ENCODE measurements at regions of chr7 and their contacts with region 1.

Region 1: GRCh38 chr7:97859606-97860204 is 12.5 kb downstream of the ASNS start:
- DNase-seq: no peak
- H3K4me3 ChIP-seq: no peak overlapping the region
- H3K4me3 Mint-ChIP-seq: no peak overlapping the region
- H3K27ac ChIP-seq: no peak overlapping the region
- H3K27ac Mint-ChIP-seq: no peak overlapping the region
- H3K4me1 ChIP-seq: no peaks in the 10 kb centered on the region
- H3K4me1 Mint-ChIP-seq: no peaks in the 10 kb centered on the region
- H3K27me3 ChIP-seq: no peaks in the 10 kb centered on the region
- H3K27me3 Mint-ChIP-seq: peaks cover 0 to 2% (median 0%) of the 10 kb centered on the region in 3 donors
- CTCF ChIP-seq: no peak

Region 2: GRCh38 chr7:95865716-95866371 is 1993.9 kb before region 1 on chr7:
- intact Hi-C with region 1: loop called in 1 of 2 experiments (anchors 5 kb)
- DNase-seq: no peak
- H3K4me3 ChIP-seq: no peak overlapping the region
- H3K4me3 Mint-ChIP-seq: no peak overlapping the region
- H3K27ac ChIP-seq: no peak overlapping the region
- H3K27ac Mint-ChIP-seq: no peak overlapping the region
- H3K4me1 ChIP-seq: no peaks in the 10 kb centered on the region
- H3K4me1 Mint-ChIP-seq: no peaks in the 10 kb centered on the region
- H3K27me3 ChIP-seq: no peaks in the 10 kb centered on the region
- H3K27me3 Mint-ChIP-seq: peaks cover 0 to 3% (median 0%) of the 10 kb centered on the region in 3 donors
- CTCF ChIP-seq: no peak

Region 3: DNA sequence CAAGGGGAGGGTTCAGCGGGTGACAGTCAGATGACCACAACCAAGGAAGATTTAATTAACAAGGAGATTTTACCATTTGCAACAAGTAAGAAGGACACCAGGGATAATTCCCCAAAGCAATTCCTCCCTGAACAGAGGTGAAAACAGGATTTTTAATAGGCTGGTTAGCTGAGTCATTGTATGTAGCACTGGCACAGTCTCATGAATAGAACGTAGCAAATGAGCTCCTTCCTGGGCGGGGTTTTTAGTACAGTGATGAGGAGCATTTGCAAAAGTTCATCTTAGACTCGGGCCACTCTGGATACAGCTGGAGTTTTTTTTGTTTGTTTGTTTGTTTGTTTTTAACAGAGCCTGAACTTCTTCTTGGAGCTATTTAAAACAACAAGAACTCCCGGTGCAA is 88.9 kb before region 1 on chr7:
- intact Hi-C with region 1: no loop called
- DNase-seq: no peak
- H3K4me3 ChIP-seq: no peak overlapping the region
- H3K4me3 Mint-ChIP-seq: no peak overlapping the region
- H3K27ac ChIP-seq: no peak overlapping the region
- H3K27ac Mint-ChIP-seq: no peak overlapping the region
- H3K4me1 ChIP-seq: no peaks in the 10 kb centered on the region
- H3K4me1 Mint-ChIP-seq: no peaks in the 10 kb centered on the region
- H3K27me3 ChIP-seq: no peaks in the 10 kb centered on the region
- H3K27me3 Mint-ChIP-seq: peaks cover 0 to 4% (median 0%) of the 10 kb centered on the region in 3 donors
- CTCF ChIP-seq: no peak

Region 4: DNA sequence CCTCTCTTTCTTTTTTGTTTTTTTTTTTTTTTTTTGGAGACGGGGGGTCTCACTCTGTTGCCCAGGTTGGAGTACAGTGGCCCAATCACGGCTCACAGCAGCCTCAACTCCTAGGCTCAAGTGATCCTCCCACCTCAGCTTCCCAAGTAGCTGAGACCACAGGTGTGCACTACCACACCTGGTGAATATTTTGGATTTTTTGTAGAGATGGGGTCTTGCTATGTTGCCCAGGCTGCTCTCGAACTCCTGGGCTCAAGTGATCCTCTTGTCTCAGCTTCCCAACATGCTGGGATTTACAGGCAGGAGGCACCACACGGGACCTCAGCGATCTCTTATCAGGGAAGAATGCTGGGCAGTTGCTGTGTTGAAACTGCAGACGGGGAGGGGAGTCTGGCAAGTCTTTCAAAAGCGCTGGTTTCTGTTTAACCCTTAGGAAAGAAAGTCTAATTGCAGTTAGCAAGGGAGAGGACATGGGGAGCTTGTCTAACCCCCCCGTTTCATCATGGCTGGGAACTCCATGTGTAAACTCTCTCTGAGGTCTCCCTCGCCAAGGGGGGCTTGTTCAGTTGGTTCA is 207.3 kb after region 1 on chr7:
- intact Hi-C with region 1: no loop called
- DNase-seq: no peak
- H3K4me3 ChIP-seq: no peak overlapping the region
- H3K4me3 Mint-ChIP-seq: no peak overlapping the region
- H3K27ac ChIP-seq: no peak overlapping the region
- H3K27ac Mint-ChIP-seq: no peak overlapping the region
- H3K4me1 ChIP-seq: no peaks in the 10 kb centered on the region
- H3K4me1 Mint-ChIP-seq: no peaks in the 10 kb centered on the region
- H3K27me3 ChIP-seq: no peaks in the 10 kb centered on the region
- H3K27me3 Mint-ChIP-seq: peaks cover 3 to 22% (median 11%) of the 10 kb centered on the region in 3 donors
- CTCF ChIP-seq: no peak